Posterior vena cava (tissue), 2 donors: ENCODE measurements at regions of chr11 and their contacts with region 1.

Region 1: GRCh38 chr11:130111948-130112830 is 42.5 kb downstream of the APLP2 start:
- DNase-seq: no peak

Region 2: DNA sequence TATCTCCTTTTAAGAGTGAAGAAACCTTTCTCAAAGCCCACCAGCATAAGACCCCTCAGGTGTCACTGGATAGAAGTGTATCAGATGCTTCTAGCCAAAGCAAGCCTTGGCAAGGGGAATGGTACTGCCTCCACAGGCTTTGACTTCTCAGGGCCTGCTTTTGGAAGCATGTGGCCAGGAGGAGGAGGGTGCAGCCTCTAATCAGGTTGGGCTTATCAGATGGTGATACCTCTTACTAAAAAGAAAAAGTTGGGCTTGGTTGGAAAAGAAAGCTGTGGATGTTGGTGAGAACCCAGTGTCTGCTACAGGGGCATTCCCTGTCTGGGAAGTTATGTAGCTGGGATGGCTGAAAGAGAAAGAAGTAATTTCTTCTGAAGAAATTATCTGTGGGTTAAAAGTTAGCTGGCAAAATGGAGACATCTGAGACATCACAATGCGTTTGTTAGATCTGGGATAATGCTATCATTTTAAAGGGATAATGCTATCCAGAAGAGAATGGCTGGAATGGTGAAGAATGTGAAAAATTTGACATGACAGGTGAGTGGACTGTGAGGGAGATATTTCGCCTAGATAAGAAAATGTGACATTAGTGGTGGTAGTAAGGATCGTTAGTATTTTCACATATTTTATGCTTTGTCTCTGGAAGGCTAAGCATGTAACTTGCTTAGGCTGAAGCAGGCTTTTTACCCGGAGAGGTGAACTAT is 35.3 kb before region 1 on chr11:
- intact Hi-C with region 1: loop called in 1 of 2 experiments (anchors 2 kb)
- DNase-seq: no peak